Calu3 (cell line): ENCODE measurements at regions of chr2 and their contacts with region 1.

Region 1: DNA sequence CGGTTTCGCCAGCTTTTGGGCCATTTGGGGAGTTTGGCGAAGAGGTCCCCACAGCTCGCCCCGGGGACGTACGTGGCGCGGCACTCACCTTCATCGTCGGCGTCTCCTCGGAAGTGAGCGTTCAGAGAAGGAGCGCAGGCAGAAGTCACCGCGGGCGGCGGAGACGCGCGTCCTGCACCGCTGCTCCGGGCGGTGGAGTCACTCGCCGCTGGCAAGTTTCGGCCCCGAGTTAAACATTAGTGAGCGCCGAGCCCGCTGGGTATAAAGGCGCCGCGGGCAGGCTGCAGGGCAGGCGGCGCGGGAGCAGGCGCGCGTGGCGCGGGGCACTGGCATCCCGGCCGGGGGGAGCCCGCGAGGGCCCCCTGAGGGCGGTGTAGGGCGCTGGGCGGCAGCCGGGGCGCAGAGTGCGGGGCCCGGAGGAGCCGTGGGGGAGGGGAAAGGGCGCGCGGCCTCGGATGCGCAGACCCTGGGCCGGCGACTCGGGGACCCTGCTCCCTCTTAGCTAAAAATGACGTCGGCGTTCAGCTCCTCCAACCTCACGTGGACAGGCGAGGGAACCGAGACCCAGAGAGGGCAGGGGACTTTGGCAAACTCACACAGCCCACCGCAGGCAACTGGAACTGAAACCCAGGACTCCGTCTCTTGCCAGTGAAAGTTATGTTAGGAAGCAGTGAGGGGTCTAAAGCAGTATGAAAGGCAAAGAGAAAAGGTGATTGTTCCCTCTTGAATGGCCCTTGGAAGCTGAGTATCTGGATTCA is at the start of gene DPP4:
- DNase-seq: peak; percentile 71
- H3K4me3 Mint-ChIP-seq: peak within 1 kb of the TSS; percentile 95
- H3K27ac Mint-ChIP-seq: peak within 1 kb of the TSS; percentile 75
- H3K4me1 Mint-ChIP-seq: peaks cover 33% of the 10 kb centered on the region
- H3K27me3 Mint-ChIP-seq: no peaks in the 10 kb centered on the region
- CTCF ChIP-seq: no peak
- total RNA-seq, gene DPP4: 27.6 TPM in 2 replicates

Region 2: GRCh38 chr2:162007447-162008040 is 66.5 kb before region 1 on chr2:
- CTCF ChIA-PET with region 1: no interaction called
- intact Hi-C with region 1: loop called (anchors 5 kb)
- DNase-seq: no peak
- H3K4me3 Mint-ChIP-seq: no peak overlapping the region
- H3K27ac Mint-ChIP-seq: no peak overlapping the region
- H3K4me1 Mint-ChIP-seq: no peaks in the 10 kb centered on the region
- H3K27me3 Mint-ChIP-seq: no peaks in the 10 kb centered on the region
- CTCF ChIP-seq: peak; percentile 15

Region 3: GRCh38 chr2:162029287-162029901 is 44.7 kb before region 1 on chr2:
- CTCF ChIA-PET with region 1: no interaction called
- intact Hi-C with region 1: loop called (anchors 2 kb)
- DNase-seq: peak; percentile 70
- H3K4me3 Mint-ChIP-seq: no peak overlapping the region
- H3K27ac Mint-ChIP-seq: no peak overlapping the region
- H3K4me1 Mint-ChIP-seq: peaks cover 29% of the 10 kb centered on the region
- H3K27me3 Mint-ChIP-seq: no peaks in the 10 kb centered on the region
- CTCF ChIP-seq: no peak

Region 4: DNA sequence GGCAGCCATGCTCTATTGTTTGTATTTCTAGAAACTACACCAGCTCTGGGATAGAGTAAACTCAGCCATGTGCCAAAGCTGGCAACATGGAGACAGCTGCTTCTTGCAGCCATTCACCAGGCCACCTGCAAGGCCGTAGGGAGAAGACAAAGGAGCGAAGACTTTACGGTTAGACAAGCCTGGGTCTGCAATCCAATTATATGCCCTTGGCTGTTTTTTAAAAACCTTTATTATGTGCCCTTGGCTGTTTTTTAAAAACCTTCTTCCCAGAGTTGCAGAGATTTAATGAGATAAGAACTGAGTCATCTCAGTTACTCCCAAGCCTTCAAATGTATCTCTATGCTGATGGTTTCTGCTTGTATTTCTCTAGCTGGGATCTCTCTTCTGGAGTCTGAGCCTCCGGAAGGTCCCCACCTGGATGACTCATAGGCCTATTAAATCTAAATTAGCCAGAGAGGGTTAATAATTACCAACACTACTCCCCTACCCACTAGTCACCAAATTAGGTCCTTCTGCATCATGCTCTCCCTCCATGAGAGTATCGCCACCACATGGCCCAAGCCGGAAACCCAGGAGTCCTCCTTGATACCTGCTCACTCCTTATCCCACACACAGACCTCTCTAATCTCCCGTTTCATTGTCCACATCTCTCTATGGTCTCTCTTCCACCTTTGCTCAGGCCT is 17.4 kb after region 1 on chr2:
- CTCF ChIA-PET with region 1: interaction called, 6 read pairs
- intact Hi-C with region 1: loop called (anchors 2 kb)
- DNase-seq: peak; percentile 82
- H3K4me3 Mint-ChIP-seq: no peak overlapping the region
- H3K27ac Mint-ChIP-seq: peak overlapping the region; percentile 66
- H3K4me1 Mint-ChIP-seq: peaks cover 47% of the 10 kb centered on the region
- H3K27me3 Mint-ChIP-seq: no peaks in the 10 kb centered on the region
- CTCF ChIP-seq: no peak

Region 5: DNA sequence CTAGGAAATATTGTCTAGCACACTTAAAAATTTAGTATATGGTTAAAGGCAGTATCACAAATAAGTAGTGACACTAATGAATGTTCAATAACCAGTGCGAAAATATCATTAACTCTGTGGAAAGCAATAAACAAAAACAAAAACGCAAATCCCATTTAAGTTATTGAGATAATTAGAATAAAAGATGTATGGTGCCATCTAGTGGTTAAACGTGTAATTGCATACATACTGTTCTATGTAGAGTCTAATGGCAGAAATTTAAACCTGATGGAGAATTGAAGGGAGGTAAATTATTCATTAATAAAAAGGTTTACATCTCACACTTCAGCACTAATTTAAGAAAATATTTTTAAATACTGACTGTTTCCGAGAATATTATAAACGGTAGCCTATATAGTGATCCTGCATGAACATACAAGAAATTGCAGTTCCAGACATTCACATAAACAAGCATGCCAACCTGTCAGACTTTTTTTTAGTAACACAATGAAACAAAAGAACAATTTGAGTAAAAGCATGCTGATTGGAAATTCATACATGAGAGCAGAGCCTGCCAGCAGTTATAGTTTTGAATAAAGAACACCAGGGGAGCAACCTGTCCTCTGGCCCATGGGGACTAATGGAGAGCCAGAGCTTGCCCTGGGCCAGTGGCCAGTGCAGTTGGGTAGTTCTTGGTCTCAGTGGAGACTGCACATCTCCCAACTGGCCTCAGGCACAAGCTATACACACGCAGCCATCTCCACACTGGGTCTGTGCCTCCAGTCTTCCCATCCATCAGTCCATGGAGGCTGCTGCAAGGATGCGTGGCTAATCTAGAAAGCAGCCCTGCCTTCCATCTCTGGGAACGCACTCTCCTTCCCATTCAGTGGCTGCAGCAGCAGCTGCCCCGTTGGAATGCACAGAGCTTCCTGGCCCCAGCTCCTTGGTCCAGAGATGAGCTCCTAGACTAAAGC is 50.0 kb after region 1 on chr2:
- CTCF ChIA-PET with region 1: no interaction called
- intact Hi-C with region 1: loop called (anchors 5 kb)
- DNase-seq: peak; percentile 13
- H3K4me3 Mint-ChIP-seq: no peak overlapping the region
- H3K27ac Mint-ChIP-seq: no peak overlapping the region
- H3K4me1 Mint-ChIP-seq: no peaks in the 10 kb centered on the region
- H3K27me3 Mint-ChIP-seq: peaks cover 14% of the 10 kb centered on the region
- CTCF ChIP-seq: no peak